ENCODE measurements at regions of chr12 and their contacts with region 1.

Region 1: GRCh38 chr12:130031571-130032189 is 127.9 kb upstream of the TMEM132D start:
- DNase-seq: peak; percentile 59 to 99
- H3K4me3 ChIP-seq: no peak overlapping the region
- H3K27ac ChIP-seq: no peak overlapping the region
- H3K4me1 ChIP-seq: no peaks in the 10 kb centered on the region
- H3K27me3 ChIP-seq: peaks cover 0 to 15% (median under 1%) of the 10 kb centered on the region in 4 experiments; a peak in 4 of 7 replicates
- CTCF ChIP-seq: peak; percentile 92 to 100 (median 96)
- EP300 ChIP-seq: no peak
- POLR2A ChIP-seq: no peak
- RAD21 ChIP-seq: peak; percentile 72 to 83

Region 2: DNA sequence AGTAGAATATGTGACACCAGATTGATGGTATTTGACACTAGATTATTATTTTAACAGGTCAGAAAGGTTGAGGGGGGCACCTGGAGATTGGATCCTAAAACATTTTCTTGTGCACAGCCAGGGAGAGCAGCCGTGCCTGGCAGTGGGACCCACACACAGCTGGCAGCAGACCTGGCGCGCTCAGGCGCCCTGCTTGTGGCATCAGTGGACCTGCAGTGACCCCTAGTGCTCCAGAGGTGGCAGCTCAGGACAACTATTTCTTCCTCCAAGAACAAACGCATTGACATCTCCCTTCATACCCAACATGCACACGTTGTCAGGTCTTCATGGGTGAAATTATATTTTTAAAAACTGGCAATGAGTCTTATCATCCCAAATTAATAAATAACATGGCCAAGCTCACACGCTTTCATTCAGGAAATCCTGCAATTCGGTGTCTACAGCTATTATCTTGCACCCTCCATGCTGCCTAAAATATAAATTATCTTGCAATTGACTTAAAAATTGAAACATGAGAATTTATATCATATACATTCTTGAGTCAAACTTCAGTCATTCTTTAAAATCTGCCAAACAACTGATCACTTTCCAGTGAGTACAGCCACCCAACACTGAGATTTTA is 120.1 kb before region 1 on chr12:
- CTCF ChIA-PET with region 1: interaction called, 11 read pairs
- POLR2A ChIA-PET with region 1: no interaction called
- DNase-seq: peak in 1 of 2 experiments; percentile 77
- H3K4me3 ChIP-seq: no peak overlapping the region
- H3K27ac ChIP-seq: no peak overlapping the region
- H3K4me1 ChIP-seq: 0 out of 7 replicates have a peak, but pooled peaks cover 0 to 3% (median 0%) of the 10 kb centered on the region in 4 experiments
- H3K27me3 ChIP-seq: peaks cover 0 to 6% (median 6%) of the 10 kb centered on the region in 4 experiments; a peak in 5 of 7 replicates
- CTCF ChIP-seq: peak; percentile 92 to 94 (median 92)
- EP300 ChIP-seq: no peak
- POLR2A ChIP-seq: no peak
- RAD21 ChIP-seq: peak; percentile 100

Region 3: GRCh38 chr12:129997239-129997638 is 34.4 kb before region 1 on chr12:
- CTCF ChIA-PET with region 1: interaction called, 12 read pairs
- POLR2A ChIA-PET with region 1: no interaction called
- DNase-seq: peak in 1 of 2 experiments; percentile 34
- H3K4me3 ChIP-seq: peak overlapping the region in 3 of 4 experiments; percentile 22 to 44 (median 23); a peak in 3 of 8 replicates
- H3K27ac ChIP-seq: peak overlapping the region; percentile 74
- H3K4me1 ChIP-seq: peaks cover 6 to 23% (median 22%) of the 10 kb centered on the region in 4 experiments; a peak in 6 of 7 replicates
- H3K27me3 ChIP-seq: peaks cover 0 to 5% (median 2%) of the 10 kb centered on the region in 4 experiments; a peak in 3 of 7 replicates
- CTCF ChIP-seq: no peak
- EP300 ChIP-seq: no peak
- POLR2A ChIP-seq: peak in 1 of 2 experiments; percentile 52; a peak in 1 of 3 replicates
- RAD21 ChIP-seq: no peak

Region 4: DNA sequence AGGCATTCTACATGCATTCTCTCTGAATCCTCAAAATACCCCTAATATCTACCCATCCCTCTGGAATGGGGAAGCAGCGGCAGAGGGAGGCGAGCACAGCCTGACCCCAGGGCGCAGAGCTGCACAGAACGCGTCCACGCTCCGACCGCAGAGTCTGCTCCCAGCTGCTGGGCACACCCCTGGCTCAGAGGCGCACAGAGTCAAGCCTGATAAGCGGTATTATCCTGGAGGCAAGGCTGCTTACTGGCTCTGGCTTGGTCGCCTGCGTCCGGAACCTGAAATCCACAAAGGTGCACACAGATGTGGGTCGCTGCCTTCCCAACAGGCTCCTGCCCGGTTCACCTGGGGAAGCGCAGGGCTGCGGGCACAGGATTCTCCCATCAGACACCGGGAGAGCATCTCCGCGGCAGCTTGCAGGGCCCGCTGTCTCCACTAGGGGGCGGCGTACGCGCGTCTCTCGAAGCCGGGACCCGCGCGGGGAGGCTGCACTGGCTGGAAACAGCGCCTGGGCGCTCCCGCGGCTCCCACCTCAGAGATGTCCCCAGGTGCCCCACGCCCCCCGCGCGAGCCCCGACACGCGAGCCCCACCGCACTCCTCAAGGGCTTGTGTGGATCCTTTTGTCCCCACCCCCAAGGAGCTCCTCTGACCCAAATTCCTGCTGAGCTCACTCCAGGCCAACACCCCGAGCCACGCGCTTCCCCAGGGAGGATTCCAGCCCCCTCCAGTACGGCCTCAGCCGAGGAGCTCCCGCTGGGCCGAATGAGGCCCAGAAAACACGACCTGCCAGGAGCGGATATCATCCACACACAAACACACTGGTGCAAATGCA is 10.5 kb after region 1 on chr12:
- CTCF ChIA-PET with region 1: interaction called, 41 read pairs
- POLR2A ChIA-PET with region 1: no interaction called
- DNase-seq: peak in 1 of 2 experiments; percentile 99
- H3K4me3 ChIP-seq: peak overlapping the region in 1 of 4 experiments; percentile 29; a peak in 1 of 8 replicates
- H3K27ac ChIP-seq: no peak overlapping the region
- H3K4me1 ChIP-seq: peaks cover 0 to 13% (median 5%) of the 10 kb centered on the region in 4 experiments; a peak in 5 of 7 replicates
- H3K27me3 ChIP-seq: peaks cover 22 to 81% (median 55%) of the 10 kb centered on the region in 4 experiments
- CTCF ChIP-seq: peak; percentile 91 to 95 (median 93)
- EP300 ChIP-seq: no peak
- POLR2A ChIP-seq: no peak
- RAD21 ChIP-seq: peak; percentile 82 to 92

Region 5: DNA sequence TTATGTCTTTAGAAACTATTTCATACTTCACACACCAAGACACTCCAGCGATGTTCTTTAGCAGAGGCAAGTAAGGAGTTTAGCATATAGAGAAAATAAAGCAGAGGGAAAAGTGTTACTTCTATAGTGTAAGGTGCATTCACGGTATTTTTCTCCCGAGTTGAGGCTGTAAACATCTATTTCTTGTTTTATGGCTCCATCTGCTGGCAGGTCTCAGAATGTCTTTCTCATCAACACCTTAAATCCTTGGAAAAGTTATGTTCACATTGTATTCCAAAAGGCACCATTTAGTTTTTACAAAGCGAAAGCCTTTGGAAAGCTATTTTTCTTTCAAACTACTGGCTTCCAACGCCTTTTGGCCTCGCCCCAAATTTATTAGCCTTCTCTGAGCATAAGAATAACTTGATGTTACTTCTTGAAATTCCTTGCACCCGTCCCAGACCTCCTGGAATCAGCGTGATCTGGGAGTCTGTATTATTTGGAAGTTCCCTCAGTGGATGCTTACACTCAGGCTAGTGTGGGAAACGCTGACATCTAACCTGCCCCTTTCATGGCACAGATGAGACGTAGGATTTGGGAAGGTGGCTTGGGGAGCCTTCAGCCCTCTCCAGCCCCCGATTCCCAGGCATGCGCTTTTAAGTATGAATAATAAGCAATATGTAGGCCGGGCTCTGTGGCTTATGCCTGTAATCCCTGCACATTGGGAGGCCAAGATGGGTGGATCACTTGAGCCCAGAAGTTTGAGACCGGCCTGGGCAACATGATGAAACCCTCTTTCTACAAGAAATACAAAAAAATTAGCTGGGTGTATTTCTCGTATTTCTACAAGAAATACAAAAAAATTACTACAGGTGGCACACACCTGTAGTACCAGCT is 304.1 kb after region 1 on chr12:
- CTCF ChIA-PET with region 1: interaction called, 18 read pairs
- POLR2A ChIA-PET with region 1: no interaction called
- DNase-seq: peak in 1 of 2 experiments; percentile 55
- H3K4me3 ChIP-seq: no peak overlapping the region
- H3K27ac ChIP-seq: no peak overlapping the region
- H3K4me1 ChIP-seq: peaks cover 0 to 7% (median 6%) of the 10 kb centered on the region in 4 experiments; a peak in 6 of 7 replicates
- H3K27me3 ChIP-seq: peaks cover 0 to 8% (median 2%) of the 10 kb centered on the region in 4 experiments; a peak in 3 of 7 replicates
- CTCF ChIP-seq: peak in 2 of 3 experiments; percentile 65 to 67; a peak in 2 of 4 replicates
- EP300 ChIP-seq: no peak
- POLR2A ChIP-seq: no peak
- RAD21 ChIP-seq: peak; percentile 90 to 94

Measured in H1 (cell line).